ENCODE measurements at regions of chr5 and their contacts with region 1.

Region 1: DNA sequence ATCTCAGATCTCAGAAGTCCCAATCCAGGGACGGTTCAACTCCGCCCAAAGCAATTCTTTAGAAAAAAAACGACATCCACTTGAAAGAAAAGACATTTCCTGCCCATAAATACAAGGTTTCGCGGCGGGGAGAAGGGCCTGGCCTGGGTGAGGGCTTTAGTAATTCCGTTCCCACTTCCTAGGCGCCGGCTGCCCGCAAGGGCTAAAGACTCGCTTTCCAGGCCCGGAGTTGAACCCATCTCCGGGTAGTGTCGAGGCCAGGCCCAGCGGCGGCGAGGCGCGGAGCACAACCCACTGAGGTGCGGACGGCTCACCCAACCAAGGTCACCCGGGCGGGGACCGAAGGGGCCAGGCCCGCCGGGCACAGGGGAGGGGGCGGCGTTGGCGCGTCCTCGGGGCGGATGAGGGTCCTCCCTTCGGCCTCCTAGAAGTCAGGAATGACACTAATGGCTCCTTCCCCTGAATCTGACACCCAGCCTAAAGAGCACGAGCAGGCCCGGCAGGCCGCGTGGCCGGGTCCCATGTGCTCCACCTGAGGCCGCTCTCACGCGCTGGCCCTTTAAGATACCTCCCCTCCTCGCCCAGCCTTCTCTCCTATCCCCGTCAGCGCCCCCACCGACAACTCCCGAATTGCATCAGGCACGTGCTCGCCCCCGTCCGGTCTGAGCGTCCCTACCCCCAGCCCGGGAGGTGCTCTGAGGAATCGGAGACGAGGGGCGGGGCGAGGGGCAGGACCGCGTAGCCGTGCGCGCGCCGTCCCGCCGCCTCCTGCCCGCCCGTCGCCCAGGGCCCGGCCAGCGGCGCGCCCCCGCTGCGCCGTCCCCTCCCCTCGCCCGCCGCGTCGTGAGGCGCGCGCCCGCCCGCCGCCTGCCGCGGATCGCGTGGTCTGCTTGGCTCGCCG is 467 bp upstream of the LARP1 start:
- DNase-seq: peak; percentile 99

Region 2: GRCh38 chr5:154683101-154683880 is 71.4 kb before region 1 on chr5:
- intact Hi-C with region 1: loop called (anchors 1 kb)
- DNase-seq: no peak

Region 3: GRCh38 chr5:154811653-154812365 is 57.1 kb after region 1 on chr5:
- intact Hi-C with region 1: loop called (anchors 5 kb)
- DNase-seq: peak; percentile 79

Region 4: DNA sequence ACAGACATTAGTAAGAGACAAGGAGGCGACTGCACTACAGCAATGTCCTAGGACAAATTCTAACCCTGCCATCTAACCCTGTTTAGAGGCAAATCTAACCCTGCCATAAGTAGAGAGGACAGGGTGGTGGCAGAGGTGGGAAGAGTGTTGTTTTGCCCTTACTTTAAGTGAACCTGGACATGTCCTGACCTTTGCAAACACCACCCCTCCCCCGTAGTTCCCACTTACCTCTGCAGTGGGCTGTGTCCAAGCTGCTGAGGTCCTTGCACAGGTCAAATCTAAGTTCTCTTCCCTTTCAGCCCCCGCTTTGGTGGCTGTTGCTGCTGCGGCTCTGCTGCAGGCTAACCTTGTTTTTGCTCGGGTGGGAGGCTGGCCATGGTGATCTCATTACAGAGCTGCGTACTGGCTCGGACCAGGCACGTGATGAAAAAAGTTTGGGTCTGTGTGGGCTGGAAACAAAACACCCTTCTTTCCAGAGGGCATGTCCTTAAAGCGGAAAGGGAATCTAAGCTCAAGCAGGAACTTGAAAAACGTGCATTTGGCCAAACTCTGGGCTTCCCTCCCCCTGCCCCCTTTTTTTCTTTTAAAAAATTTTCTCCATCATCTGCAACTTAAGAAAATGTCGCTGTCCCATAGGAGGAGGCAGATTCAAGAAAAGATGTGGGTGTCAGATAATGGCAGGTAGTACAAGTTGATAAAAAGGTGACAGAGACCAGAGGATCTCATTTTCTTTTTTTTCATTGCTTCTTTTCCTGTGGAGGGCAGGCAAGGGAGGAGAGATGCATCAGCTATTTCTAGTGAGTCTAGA is 95.7 kb after region 1 on chr5 and contains the start of gene FAXDC2:
- intact Hi-C with region 1: loop called (anchors 2 kb)
- DNase-seq: peak; percentile 89
- total RNA-seq, gene FAXDC2: 10.1 TPM

Region 5: DNA sequence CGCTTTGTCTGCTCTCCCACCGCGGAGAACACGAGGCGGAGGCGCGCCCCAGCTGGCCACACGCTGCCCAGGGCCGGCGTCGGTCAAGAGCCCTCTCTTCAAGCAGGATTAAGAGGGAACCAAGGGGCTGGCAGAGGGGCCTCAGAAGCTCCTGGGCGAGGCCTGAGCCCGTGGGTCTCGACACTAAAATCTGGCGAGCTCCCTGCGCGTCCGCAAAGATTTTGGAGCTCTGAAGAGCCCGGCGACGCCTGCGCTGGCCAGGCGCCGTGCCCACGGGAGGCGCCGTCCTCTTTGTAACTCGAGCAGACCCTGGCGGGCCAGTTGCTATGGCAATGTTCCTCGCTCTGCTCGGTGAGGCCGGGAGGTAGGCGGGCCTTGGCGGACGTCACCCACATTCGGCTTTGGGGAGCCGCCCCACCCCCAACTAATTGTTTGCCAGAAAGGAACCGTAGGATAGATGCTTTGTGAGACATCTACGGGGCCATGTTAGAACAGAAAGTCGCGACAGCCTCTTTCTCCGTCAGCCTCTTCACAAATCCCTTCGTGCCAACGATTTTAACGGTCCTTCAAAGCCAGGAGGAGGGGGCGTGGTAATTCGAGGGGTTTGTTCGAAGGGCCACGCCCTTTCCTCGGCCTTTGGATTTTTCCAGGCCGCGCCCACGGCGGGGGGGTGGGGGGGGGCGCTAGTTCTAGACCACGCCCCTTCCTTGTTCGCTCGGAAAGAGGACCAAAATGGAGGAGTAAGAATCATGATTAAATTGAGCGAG is 103.0 kb after region 1 on chr5:
- intact Hi-C with region 1: loop called (anchors 2 kb)
- DNase-seq: peak; percentile 96